ENCODE measurements at regions of chr16 and their contacts with region 1.

Region 1: DNA sequence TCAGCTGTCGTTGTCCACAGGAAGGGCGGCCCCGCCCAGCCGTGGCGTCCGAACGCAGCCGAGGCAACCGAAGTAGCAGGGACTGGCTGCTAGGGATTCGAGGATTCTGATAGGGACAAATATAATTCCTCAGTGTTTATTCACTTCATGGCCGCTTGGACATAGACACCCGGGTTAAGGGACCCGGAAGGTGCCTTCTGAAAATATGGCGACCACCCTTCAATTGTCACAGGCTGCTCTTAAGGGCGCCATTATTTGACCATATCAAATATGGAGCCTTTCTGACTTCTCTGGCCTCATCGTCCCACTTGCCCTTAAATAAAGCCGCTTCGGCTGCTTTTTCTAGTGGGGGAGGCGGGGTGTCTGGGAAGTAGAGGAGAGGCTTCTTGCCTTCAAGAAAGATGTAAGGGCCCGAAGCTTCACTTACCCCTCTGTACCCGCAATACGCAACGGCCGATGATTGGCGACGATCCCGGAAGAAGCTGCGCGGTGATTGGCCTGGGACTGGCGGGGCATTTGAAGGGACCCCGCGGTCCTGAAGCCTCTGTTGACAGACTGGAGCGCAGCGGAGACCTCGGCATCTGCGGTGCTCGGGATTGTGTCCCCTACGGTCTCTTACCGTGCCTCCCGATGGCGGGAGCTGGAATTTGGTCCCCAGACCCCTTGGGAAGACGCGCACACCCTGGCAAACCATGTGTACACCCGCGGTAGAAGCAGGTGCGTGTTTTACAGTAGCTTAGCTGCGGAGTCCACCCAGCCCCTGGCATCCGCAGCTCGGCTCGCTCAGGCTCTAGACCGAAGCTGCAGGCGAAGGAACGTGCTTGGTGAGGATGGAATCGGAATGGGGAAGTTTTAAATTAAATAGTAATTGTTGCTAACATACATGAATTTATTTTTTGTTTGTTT is at the start of gene ZNF688:
- DNase-seq: peak; percentile 81
- ATAC-seq: peak; percentile 93
- H3K4me3 ChIP-seq: peak within 1 kb of the TSS; percentile 66 to 89
- H3K27ac ChIP-seq: peak within 1 kb of the TSS; percentile 94
- H3K4me1 ChIP-seq: peaks cover 9% of the 10 kb centered on the region
- H3K27me3 ChIP-seq: no peaks in the 10 kb centered on the region
- CTCF ChIP-seq: no peak
- total RNA-seq, gene ZNF688: 7.7 TPM

Region 2: DNA sequence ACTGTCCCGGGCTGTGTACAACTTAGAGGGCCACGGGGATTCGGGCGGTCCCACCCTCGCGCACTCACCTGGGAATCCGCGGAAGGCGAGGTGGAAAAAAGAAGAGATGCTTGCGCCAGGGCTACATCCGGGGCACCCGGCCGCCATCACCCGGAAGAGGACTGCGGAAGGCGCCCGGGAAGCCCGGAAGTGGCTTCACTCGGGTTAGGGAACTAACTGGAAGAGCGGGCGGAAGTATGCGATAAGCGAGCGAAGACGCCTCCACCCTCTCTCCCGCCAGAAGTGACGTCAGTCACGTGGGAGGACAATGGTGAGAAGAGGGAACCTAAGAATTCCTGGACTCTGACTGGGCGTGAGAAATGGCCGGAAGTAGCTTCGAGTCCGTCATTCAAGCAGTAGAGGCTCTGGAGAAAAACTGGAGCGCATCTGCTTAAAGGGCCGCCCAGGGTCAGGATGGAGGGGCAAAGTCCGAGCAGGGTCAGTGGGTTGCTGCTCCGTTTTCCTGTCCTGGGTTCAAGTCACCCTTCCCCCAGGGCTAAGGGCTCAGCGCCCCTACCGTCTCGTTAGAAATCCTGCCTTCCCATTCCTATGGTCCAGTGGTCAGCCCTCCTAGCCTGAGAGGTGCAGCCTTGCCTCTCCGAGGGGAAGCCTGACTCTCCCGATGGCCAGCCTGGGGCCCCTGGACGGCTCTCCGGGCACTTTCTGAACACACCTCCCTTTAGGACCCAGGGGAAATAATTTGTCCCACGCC is 216.6 kb before region 1 on chr16 and contains the start of gene CD2BP2:
- CTCF ChIA-PET with region 1: no interaction called
- POLR2A ChIA-PET with region 1: no interaction called
- in situ Hi-C with region 1: no loop called
- intact Hi-C with region 1: no loop called
- DNase-seq: peak; percentile 98
- ATAC-seq: peak; percentile 92
- H3K4me3 ChIP-seq: peak within 1 kb of the TSS; percentile 98 to 99
- H3K27ac ChIP-seq: peak within 1 kb of the TSS; percentile 99
- H3K4me1 ChIP-seq: peaks cover 49% of the 10 kb centered on the region
- H3K27me3 ChIP-seq: no peaks in the 10 kb centered on the region
- CTCF ChIP-seq: no peak
- total RNA-seq, gene CD2BP2: 90.7 TPM

Region 3: GRCh38 chr16:30592871-30593270 is 20.9 kb after region 1 on chr16:
- CTCF ChIA-PET with region 1: no interaction called
- POLR2A ChIA-PET with region 1: interaction called, 13 read pairs
- in situ Hi-C with region 1: no loop called
- intact Hi-C with region 1: no loop called
- DNase-seq: no peak
- ATAC-seq: no peak
- H3K4me3 ChIP-seq: no peak overlapping the region
- H3K27ac ChIP-seq: no peak overlapping the region
- H3K4me1 ChIP-seq: no peaks in the 10 kb centered on the region
- H3K27me3 ChIP-seq: no peaks in the 10 kb centered on the region
- CTCF ChIP-seq: no peak

Region 4: GRCh38 chr16:30858829-30859423 is 287.0 kb after region 1 on chr16:
- CTCF ChIA-PET with region 1: no interaction called
- POLR2A ChIA-PET with region 1: no interaction called
- in situ Hi-C with region 1: no loop called
- intact Hi-C with region 1: no loop called
- DNase-seq: no peak
- ATAC-seq: no peak
- H3K4me3 ChIP-seq: no peak overlapping the region
- H3K27ac ChIP-seq: no peak overlapping the region
- H3K4me1 ChIP-seq: peaks cover 5% of the 10 kb centered on the region; the same call in 1 of the 2 replicates
- H3K27me3 ChIP-seq: no peaks in the 10 kb centered on the region
- CTCF ChIP-seq: no peak

Region 5: GRCh38 chr16:30893417-30893743 is 321.4 kb after region 1 on chr16:
- CTCF ChIA-PET with region 1: no interaction called
- POLR2A ChIA-PET with region 1: no interaction called
- in situ Hi-C with region 1: no loop called
- intact Hi-C with region 1: no loop called
- DNase-seq: no peak
- ATAC-seq: no peak
- H3K4me3 ChIP-seq: peak overlapping the region; percentile 72 to 80
- H3K27ac ChIP-seq: peak overlapping the region; percentile 82
- H3K4me1 ChIP-seq: peaks cover 24% of the 10 kb centered on the region
- H3K27me3 ChIP-seq: no peaks in the 10 kb centered on the region
- CTCF ChIP-seq: no peak

Measured in Panc1 (cell line).